WTC11 (cell line): ENCODE measurements at regions of chr9 and their contacts with region 1.

Region 1: DNA sequence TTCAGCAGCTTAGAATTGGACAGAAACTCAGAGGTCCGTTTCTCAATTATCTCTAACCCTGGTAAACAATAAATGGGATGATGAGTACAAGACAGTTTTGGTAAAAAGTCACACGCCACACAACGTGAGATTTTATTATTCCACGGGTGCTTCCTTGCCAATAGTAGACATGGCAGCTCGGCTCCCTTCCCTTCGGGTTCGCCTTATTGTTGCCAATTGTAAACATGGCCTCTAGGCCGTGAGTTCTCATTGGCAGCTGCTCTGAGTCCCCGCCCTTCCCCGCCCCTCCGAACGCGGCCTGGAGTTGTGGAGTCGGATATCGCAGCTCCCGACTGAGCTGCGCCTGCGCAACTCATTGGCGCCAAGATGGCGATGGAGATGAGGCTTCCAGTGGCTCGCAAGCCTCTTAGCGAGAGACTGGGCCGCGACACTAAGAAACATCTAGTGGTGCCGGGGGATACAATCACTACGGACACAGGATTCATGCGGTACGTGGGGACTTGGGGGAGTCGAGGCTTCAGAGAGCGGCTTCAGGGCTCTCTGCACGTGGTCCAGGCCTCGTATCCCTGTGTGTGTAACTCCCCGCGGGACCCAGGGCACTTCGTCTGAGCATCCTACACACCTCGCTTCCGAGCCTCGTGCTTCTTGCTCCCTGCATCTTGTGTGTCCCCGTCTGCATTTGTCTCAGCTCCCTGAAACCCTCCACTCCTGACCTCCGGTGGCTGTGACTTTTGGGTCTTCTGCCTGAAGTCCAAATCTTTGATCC is at the start of gene EXOSC2:
- DNase-seq: peak; percentile 98
- ATAC-seq: peak; percentile 73
- H3K4me3 Mint-ChIP-seq: peak within 1 kb of the TSS; percentile 98
- H3K27ac Mint-ChIP-seq: peak within 1 kb of the TSS; percentile 94
- H3K4me1 Mint-ChIP-seq: peaks cover 58% of the 10 kb centered on the region
- H3K27me3 Mint-ChIP-seq: no peaks in the 10 kb centered on the region
- CTCF ChIP-seq: no peak
- total RNA-seq, gene EXOSC2: 76.1 to 80.3 TPM (median 79.2 TPM) in 3 replicates

Region 2: GRCh38 chr9:130473566-130473965 is 220.0 kb before region 1 on chr9:
- CTCF ChIA-PET with region 1: interaction called, 12 read pairs
- POLR2A ChIA-PET with region 1: no interaction called
- DNase-seq: no peak
- ATAC-seq: no peak; the same call in 1 of the 2 replicates
- H3K4me3 Mint-ChIP-seq: no peak overlapping the region
- H3K27ac Mint-ChIP-seq: no peak overlapping the region
- H3K4me1 Mint-ChIP-seq: peaks cover 14% of the 10 kb centered on the region
- H3K27me3 Mint-ChIP-seq: no peaks in the 10 kb centered on the region
- CTCF ChIP-seq: no peak

Region 3: DNA sequence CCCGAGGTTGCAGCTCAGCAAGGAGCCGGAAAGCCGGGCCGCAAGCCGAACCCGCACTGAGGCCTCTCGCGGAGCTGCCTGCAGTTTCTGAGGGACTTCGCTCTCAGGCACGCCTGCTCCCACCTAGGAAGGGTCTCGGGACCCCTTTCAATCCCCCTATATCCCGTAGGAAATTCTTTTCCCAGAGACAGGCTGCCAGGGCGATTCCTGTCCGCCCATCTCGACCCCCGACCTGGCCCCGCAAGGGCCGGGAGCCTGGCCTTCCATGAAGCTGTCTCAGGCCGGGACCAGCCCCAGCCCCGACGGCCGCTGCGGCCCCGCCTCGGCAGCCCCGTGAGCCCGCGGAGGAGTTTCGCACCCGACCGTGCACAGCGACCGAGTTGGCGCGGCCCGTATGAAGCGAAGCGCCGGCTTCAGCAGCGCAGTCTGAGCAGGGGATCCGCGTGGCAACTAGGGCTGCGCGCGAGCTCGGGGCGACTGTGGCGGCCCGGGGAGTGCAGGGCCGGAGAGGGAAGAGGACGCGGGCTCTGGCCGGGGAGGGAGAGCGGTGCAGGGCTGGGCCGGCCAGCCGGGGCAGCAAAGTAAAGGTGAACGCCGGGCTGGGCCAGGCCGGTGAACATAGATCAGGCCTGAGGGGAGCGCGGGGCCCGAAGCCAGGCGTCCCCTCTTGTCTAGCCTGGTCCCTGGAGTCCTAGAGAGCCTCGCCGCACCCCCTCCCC is 30.2 kb before region 1 on chr9:
- CTCF ChIA-PET with region 1: interaction called, 12 read pairs
- POLR2A ChIA-PET with region 1: no interaction called
- DNase-seq: peak; percentile 62
- ATAC-seq: peak; percentile 13; the same call in 1 of the 2 replicates
- H3K4me3 Mint-ChIP-seq: peak overlapping the region; percentile 70
- H3K27ac Mint-ChIP-seq: no peak overlapping the region
- H3K4me1 Mint-ChIP-seq: peaks cover 27% of the 10 kb centered on the region
- H3K27me3 Mint-ChIP-seq: peaks cover 100% of the 10 kb centered on the region
- CTCF ChIP-seq: no peak

Region 4: GRCh38 chr9:130707225-130707976 is 13.8 kb after region 1 on chr9:
- CTCF ChIA-PET with region 1: interaction called, 21 read pairs
- POLR2A ChIA-PET with region 1: no interaction called
- DNase-seq: peak; percentile 70
- ATAC-seq: peak; percentile 50
- H3K4me3 Mint-ChIP-seq: no peak overlapping the region
- H3K27ac Mint-ChIP-seq: peak overlapping the region; percentile 91
- H3K4me1 Mint-ChIP-seq: peaks cover 3% of the 10 kb centered on the region; the same call in 1 of the 2 replicates
- H3K27me3 Mint-ChIP-seq: no peaks in the 10 kb centered on the region
- CTCF ChIP-seq: peak; percentile 80